ENCODE measurements at regions of chr3 and their contacts with region 1.

Region 1: GRCh38 chr3:171646357-171647133 is 163.7 kb downstream of the PLD1 start:
- DNase-seq: no peak
- ATAC-seq: peak; percentile 80

Region 2: GRCh38 chr3:171556148-171557145 is 90.1 kb before region 1 on chr3:
- intact Hi-C with region 1: no loop called
- DNase-seq: no peak
- ATAC-seq: peak; percentile 79

Region 3: GRCh38 chr3:171743327-171744157 is 97.0 kb after region 1 on chr3:
- intact Hi-C with region 1: loop called (anchors 2 kb)
- DNase-seq: no peak
- ATAC-seq: no peak

Region 4: GRCh38 chr3:171772427-171773056 is 126.0 kb after region 1 on chr3:
- intact Hi-C with region 1: loop called (anchors 2 kb)
- DNase-seq: no peak
- ATAC-seq: no peak

Region 5: GRCh38 chr3:171829841-171830517 is 183.4 kb after region 1 on chr3:
- intact Hi-C with region 1: loop called (anchors 5 kb)
- DNase-seq: peak; percentile 92
- ATAC-seq: peak; percentile 91

Region 6: GRCh38 chr3:172341482-172342059 is 695.0 kb after region 1 on chr3:
- intact Hi-C with region 1: loop called (anchors 10 kb)
- DNase-seq: no peak
- ATAC-seq: peak; percentile 55